PC-9 (cell line): ENCODE measurements at regions of chr7 and their contacts with region 1.

Region 1: DNA sequence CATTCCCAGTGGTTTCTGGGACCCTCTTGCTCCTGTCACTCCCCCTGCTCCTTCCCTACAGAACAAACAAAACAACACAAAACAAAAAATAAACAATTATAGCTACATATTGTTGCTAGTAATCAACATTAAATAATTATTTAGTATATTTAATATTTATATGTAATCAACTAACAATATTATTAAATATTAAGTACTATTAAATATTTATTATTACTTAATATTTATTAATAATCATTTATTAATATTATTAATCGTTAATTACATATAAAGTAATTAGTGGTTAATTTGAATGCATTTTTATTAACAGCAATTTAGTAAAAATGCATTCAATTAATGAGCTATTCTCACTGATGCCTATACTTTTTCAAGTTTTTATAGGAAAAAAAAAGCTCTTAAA is 139.4 kb downstream of the ITGB8 start:
- DNase-seq: no peak
- H3K4me3 ChIP-seq: no peak overlapping the region
- H3K27ac ChIP-seq: no peak overlapping the region
- H3K4me1 ChIP-seq: no peaks in the 10 kb centered on the region
- H3K27me3 ChIP-seq: no peaks in the 10 kb centered on the region
- CTCF ChIP-seq: no peak

Region 2: DNA sequence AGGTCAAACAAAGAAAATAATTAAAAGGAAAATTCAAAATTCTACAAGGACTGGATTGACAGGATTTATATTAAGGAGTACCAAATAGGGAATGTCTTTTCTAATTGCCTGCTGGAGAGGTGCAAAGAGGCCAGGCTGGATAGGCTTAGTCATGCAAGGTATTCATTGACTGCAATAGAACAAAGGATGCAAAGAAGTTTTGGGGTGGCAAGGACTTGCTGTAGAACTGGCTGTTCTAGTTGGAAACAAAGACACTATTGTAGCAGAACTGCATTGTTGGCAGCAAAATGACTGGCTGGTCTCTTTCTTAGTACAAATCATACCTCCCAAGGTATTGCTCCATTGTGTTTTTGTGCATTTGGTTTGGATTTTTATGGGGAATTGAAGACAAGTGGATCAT is 129.2 kb before region 1 on chr7:
- CTCF ChIA-PET with region 1: interaction called, 13 read pairs
- POLR2A ChIA-PET with region 1: no interaction called
- intact Hi-C with region 1: no loop called
- DNase-seq: peak; percentile 50 to 95
- H3K4me3 ChIP-seq: no peak overlapping the region
- H3K27ac ChIP-seq: peak overlapping the region; percentile 59
- H3K4me1 ChIP-seq: peaks cover 17% of the 10 kb centered on the region
- H3K27me3 ChIP-seq: no peaks in the 10 kb centered on the region
- CTCF ChIP-seq: no peak

Region 3: DNA sequence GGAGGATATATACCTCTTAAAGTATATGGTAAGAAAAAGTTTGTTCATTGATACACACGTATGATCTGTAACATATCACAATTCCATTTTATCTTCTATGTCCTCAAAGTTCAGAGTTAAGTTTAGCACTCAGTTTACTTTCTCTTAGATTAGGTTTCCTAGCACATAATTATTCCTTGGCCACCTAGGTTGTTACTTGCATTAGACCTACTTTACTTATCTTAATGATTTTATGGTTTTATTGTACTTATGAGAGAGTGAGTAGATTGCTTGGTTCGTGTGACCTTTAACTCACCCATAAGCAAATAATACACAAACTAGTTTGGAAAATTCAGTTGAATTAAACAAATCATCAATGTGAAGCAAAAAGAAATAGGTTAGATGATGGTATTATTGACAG is 923.9 kb after region 1 on chr7:
- CTCF ChIA-PET with region 1: no interaction called
- POLR2A ChIA-PET with region 1: no interaction called
- intact Hi-C with region 1: no loop called
- DNase-seq: no peak
- H3K4me3 ChIP-seq: no peak overlapping the region
- H3K27ac ChIP-seq: no peak overlapping the region
- H3K4me1 ChIP-seq: no peaks in the 10 kb centered on the region
- H3K27me3 ChIP-seq: no peaks in the 10 kb centered on the region
- CTCF ChIP-seq: no peak